ENCODE measurements at regions of chr1 and their contacts with region 1.

Region 1: GRCh38 chr1:65687428-65688214 is 105.1 kb upstream of the PDE4B start:
- DNase-seq: peak; percentile 77
- H3K4me3 Mint-ChIP-seq: no peak overlapping the region
- H3K27ac Mint-ChIP-seq: no peak overlapping the region
- H3K4me1 Mint-ChIP-seq: peaks cover 15% of the 10 kb centered on the region
- H3K27me3 Mint-ChIP-seq: peaks cover 20% of the 10 kb centered on the region

Region 2: DNA sequence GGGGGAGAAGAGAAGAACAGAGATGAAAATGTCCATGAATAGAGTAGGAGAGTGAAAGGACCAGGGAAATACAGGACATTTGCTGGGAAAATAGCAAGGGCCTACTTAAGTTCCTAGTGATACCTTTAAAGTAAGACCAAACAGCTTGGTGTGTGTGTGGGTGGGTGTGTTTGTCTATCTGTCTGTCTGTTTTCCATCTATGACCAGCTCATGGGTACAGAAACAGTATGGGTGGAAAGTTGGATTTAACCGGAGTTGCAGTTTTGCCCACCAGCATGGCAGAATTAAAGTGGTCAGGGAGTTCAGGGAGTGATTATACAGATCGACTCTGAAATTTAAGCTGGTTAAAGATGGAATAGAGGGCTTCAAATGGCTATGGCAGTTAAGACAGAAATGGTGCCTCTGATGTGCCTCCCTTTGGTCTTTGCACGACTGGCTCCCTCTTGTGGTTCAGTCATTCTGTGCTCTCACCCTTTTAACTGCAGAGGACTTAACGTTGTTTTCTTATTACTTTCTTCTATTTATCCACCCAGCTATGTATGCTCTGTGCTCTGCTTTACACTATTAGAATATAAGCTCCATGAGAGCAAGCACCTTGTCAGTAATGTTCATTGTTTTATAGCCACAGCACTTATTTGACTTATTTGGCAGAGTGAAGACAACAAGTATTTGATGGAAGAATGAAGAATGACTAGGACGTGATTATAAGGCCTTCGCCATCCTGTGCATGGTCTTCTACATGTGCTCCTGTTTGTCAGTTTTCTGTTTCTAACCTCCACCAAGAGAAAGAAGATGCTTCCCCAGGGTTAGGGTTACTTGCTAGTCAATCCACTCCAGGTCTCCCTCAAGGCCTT is 612.3 kb before region 1 on chr1:
- CTCF ChIA-PET with region 1: interaction called, 14 read pairs
- POLR2A ChIA-PET with region 1: no interaction called
- DNase-seq: peak; percentile 69
- H3K4me3 Mint-ChIP-seq: no peak overlapping the region
- H3K27ac Mint-ChIP-seq: no peak overlapping the region
- H3K4me1 Mint-ChIP-seq: peaks cover 1% of the 10 kb centered on the region
- H3K27me3 Mint-ChIP-seq: peaks cover 9% of the 10 kb centered on the region

Region 3: DNA sequence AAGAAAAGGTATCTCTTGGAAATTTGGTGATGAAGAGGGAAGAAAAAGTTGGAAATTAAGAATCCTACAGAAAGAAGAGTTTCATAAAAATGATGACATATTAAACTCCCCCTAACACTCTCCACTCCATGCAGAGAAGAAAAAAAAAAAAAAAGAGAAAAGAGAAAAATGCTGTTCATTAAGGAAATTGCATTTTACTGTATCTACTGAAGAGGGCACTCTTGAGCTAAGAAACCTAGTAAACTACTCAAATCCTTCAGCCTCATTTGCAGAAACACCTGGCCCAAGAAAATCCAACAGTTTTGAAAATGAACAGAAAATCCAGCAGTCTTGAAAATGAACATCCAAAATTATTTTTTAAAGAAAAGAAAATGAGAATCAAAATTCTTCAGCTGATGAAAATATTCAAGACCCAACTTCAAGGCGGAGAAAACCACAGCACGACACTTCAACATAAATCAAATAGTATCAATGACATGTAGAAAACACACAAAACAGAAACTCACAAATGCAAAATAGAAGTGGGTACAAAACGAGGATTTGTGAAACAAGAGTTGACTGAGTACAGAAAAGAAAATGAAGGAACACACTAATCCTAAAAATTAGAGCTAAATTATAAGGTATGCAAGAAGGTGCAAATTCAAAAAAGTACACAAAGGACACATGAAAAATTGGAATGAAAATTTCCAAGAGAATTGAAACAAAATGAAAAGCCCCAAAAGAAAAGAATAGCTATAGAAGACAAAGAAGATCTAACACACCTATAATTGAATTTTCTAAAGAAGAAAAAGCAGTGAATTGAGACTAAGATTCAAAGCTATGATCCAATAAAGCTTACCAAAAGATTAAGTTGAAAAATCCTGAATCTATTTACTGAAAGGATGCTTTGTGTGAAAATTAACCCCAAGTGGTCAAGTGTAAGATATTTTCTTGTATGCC is 451.5 kb before region 1 on chr1:
- CTCF ChIA-PET with region 1: interaction called, 46 read pairs
- POLR2A ChIA-PET with region 1: no interaction called
- DNase-seq: no peak
- H3K4me3 Mint-ChIP-seq: no peak overlapping the region
- H3K27ac Mint-ChIP-seq: no peak overlapping the region
- H3K4me1 Mint-ChIP-seq: peaks cover 13% of the 10 kb centered on the region
- H3K27me3 Mint-ChIP-seq: peaks cover 11% of the 10 kb centered on the region

Region 4: DNA sequence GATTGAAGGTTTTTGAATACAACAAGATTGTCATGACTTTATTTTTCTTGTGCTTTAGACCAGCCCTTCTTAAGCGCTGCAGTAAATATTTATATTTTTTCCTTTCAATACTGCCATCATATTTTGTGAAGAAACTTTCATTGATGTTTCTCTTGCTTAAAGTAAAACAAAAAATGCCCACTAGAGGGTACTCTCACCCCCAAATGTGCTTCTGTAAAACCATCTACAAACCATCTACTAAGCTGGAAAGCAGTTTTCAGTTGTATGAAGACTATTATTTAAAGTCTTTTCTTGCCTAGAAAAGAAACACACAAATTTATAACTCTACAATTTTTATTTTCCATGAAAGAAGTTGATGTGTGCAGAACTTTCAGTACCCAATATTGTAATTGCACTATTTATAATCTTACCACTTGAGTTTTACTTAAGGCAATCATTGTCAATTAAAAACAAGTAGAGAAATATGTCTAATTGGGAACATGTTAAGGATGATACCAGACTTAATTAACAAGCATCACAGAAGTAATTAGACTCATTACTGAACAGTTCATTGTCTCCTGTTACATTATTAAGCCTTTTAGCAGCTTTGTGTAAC is 256.4 kb before region 1 on chr1:
- CTCF ChIA-PET with region 1: interaction called, 13 read pairs
- POLR2A ChIA-PET with region 1: no interaction called
- DNase-seq: no peak
- H3K4me3 Mint-ChIP-seq: no peak overlapping the region
- H3K27ac Mint-ChIP-seq: no peak overlapping the region
- H3K4me1 Mint-ChIP-seq: peaks cover 40% of the 10 kb centered on the region
- H3K27me3 Mint-ChIP-seq: no peaks in the 10 kb centered on the region

Region 5: DNA sequence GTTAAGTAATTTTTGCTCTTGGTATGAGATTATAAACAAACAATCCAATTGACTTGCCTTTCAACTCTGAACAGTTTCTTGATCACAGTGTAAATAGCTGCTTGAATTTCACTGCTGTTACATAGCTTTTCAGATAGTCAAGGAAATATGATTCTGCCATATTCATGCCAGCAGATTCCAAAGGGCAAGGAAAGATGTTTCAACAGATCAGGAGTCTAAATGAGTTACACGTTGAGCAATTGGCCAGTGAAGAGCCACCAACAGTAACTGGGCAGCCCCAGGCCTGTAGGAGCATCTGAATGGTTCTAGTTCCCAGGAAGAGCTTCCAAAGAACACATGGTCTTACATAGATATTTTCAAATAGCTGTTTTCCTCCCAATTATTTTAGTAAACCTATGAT is 173.5 kb before region 1 on chr1:
- CTCF ChIA-PET with region 1: no interaction called
- POLR2A ChIA-PET with region 1: no interaction called
- DNase-seq: no peak
- H3K4me3 Mint-ChIP-seq: no peak overlapping the region
- H3K27ac Mint-ChIP-seq: no peak overlapping the region
- H3K4me1 Mint-ChIP-seq: no peaks in the 10 kb centered on the region
- H3K27me3 Mint-ChIP-seq: no peaks in the 10 kb centered on the region

Region 6: GRCh38 chr1:65729259-65729658 is 41.6 kb after region 1 on chr1:
- CTCF ChIA-PET with region 1: no interaction called
- POLR2A ChIA-PET with region 1: no interaction called
- DNase-seq: no peak
- H3K4me3 Mint-ChIP-seq: no peak overlapping the region
- H3K27ac Mint-ChIP-seq: no peak overlapping the region
- H3K4me1 Mint-ChIP-seq: no peaks in the 10 kb centered on the region
- H3K27me3 Mint-ChIP-seq: peaks cover 25% of the 10 kb centered on the region

Region 7: GRCh38 chr1:65756616-65757015 is 69.0 kb after region 1 on chr1:
- CTCF ChIA-PET with region 1: no interaction called
- POLR2A ChIA-PET with region 1: no interaction called
- DNase-seq: no peak
- H3K4me3 Mint-ChIP-seq: no peak overlapping the region
- H3K27ac Mint-ChIP-seq: no peak overlapping the region
- H3K4me1 Mint-ChIP-seq: no peaks in the 10 kb centered on the region
- H3K27me3 Mint-ChIP-seq: peaks cover 18% of the 10 kb centered on the region